ENCODE measurements at regions of chr20 and their contacts with region 1.

Region 1: GRCh38 chr20:57514273-57514751 is 10.6 kb downstream of the CTCFL start:
- DNase-seq: peak; percentile 31 to 77 (median 64)
- H3K4me3 ChIP-seq: no peak overlapping the region
- H3K27ac ChIP-seq: no peak overlapping the region
- H3K27me3 ChIP-seq: peaks cover 0 to 4% (median 0%) of the 10 kb centered on the region in 45 donors
- CTCF ChIP-seq: peak; percentile 70 to 97 (median 88)

Region 2: DNA sequence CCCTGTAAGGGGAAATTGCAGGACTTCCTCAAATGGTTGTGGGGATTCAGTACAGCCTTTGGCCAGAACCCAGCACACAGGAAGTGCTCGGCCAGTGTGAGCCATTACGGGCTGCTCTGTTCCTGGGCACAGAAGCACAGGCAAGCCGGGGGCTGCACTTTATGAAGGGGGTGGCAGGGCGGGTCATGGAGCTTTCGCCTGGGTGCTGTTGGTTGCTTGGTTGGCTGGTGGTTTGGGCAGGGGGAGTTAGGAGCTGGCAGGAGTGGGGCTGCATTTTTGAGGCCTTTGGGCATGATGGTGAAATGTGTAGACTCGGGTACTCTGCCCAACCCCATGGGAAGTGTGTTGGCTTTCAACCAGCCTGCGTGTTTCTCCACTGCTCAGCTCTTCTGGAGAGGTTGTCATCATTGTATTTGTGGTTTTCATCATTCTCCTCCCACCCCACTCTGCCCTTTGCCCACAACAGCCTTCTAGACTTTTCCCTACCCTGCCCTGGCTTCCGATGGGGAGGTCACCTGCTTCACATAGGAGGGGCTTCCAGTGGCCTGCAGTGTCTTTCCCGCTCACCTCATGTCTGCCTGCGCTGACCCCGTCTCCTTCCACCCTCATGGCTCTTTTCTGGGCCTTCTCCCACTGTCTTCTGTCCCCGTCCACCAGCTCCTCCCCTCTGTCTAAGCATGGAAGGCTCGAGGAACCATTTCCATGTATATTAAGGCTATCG is 139.2 kb before region 1 on chr20:
- intact Hi-C with region 1: no loop called
- DNase-seq: peak in 2 of 10 donors; percentile 44 to 48
- H3K4me3 ChIP-seq: peak overlapping the region in 3 of 59 donors; percentile 2 to 22 (median 13)
- H3K27ac ChIP-seq: peak overlapping the region in 29 of 59 donors; percentile 4 to 69 (median 35)
- H3K27me3 ChIP-seq: no peaks in the 10 kb centered on the region
- CTCF ChIP-seq: no peak

Region 3: GRCh38 chr20:57596998-57597939 is 83.0 kb after region 1 on chr20:
- intact Hi-C with region 1: loop called (anchors 1 kb)
- DNase-seq: peak in 9 of 10 donors; percentile 47 to 82 (median 59)
- H3K4me3 ChIP-seq: peak overlapping the region in 29 of 59 donors; percentile 3 to 55 (median 29)
- H3K27ac ChIP-seq: peak overlapping the region in 1 of 59 donors; percentile 9
- H3K27me3 ChIP-seq: peaks cover 0 to 6% (median 0%) of the 10 kb centered on the region in 45 donors
- CTCF ChIP-seq: peak; percentile 86 to 100 (median 96)

Region 4: DNA sequence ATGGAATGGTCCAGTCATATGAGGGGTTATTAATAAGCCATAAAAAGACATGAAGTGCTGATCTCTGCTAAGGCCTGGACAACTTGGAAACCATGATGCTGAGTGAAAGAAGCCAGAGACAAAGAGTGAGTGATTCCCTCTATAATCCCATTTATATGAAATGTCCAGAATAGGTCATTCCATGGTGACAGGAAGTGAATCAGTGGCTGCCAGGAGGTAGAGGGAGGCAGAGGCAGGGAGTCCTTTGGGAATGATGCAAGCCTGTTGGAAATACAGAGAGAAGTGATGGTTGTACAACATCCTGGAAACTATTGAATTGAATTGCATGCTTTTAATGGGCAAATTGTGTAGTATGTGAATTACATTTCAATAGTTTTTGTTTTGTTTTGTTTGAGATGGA is 687.7 kb after region 1 on chr20:
- intact Hi-C with region 1: loop called in 1 of 2 experiments (anchors 5 kb)
- DNase-seq: no peak
- H3K4me3 ChIP-seq: no peak overlapping the region
- H3K27ac ChIP-seq: no peak overlapping the region
- H3K27me3 ChIP-seq: no peaks in the 10 kb centered on the region
- CTCF ChIP-seq: no peak

Measured in dorsolateral prefrontal cortex (tissue), 120 donors.